PC-9 (cell line): ENCODE measurements at regions of chr17 and their contacts with region 1.

Region 1: DNA sequence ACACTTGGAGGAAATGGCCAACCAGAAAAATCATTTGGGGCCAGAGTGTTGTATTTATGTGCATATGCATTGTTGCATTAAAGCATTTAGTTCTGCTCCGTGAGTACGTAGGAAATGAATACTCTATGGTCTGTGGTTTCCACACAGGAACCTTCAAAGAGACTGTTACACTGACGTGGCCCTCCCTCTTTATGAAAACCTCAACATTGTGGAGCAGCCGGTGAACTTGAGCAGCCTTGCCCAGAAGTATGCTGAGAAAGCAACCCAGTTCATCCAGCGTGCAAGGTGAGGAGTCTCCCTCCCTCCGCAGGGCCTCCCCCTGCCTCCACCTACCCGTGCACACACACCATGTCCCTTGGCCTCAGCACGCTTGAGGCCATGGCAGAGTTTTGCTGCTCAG is 65.2 kb downstream of the ARSG start:
- DNase-seq: no peak
- H3K4me3 ChIP-seq: no peak overlapping the region
- H3K27ac ChIP-seq: no peak overlapping the region
- H3K4me1 ChIP-seq: peaks cover 41% of the 10 kb centered on the region
- H3K27me3 ChIP-seq: no peaks in the 10 kb centered on the region
- CTCF ChIP-seq: no peak

Region 2: DNA sequence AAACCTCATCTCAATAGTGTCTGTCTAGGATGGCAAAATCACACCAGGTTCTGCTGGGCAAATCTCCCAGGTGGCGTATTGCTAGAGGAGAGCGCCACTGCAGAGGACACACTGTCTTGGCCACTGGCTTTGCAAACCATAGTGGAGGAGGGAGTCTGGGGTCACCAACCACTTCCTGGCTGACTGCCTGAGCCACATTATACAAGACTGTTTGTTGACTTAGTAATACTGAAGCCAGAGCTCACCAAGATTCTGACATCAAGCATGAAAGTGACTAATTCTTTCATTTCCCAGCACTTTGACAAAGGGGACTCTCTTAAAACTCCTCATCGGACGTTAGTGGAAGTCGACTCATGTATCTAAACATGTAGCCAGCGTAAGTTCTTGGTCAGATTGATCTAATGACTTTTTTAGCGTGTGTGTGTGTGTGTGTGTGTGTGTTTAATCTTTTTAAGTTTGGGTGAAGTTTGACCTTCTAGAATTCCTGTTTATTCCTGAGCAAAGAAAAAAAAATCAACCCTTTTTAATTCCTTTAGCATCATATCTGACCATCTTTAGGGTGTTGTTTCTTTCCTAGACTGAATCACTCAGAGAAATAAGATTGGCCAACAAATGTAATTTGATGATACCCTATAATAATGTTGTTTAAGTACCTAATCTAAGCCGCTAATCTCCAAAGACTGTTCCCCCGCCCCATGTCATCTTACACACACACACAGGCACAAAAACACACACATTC is 965.7 kb before region 1 on chr17:
- CTCF ChIA-PET with region 1: interaction called, 11 read pairs
- POLR2A ChIA-PET with region 1: no interaction called
- intact Hi-C with region 1: no loop called
- DNase-seq: peak; percentile 61 to 95
- H3K4me3 ChIP-seq: peak overlapping the region; percentile 33; the same call in 1 of the 2 replicates
- H3K27ac ChIP-seq: peak overlapping the region; percentile 81
- H3K4me1 ChIP-seq: peaks cover 28% of the 10 kb centered on the region
- H3K27me3 ChIP-seq: no peaks in the 10 kb centered on the region
- CTCF ChIP-seq: no peak

Region 3: GRCh38 chr17:68260051-68260762 is 96.3 kb before region 1 on chr17:
- CTCF ChIA-PET with region 1: no interaction called
- POLR2A ChIA-PET with region 1: interaction called, 39 read pairs
- intact Hi-C with region 1: no loop called
- DNase-seq: no peak
- H3K4me3 ChIP-seq: no peak overlapping the region
- H3K27ac ChIP-seq: no peak overlapping the region
- H3K4me1 ChIP-seq: peaks cover 10% of the 10 kb centered on the region; the same call in 1 of the 2 replicates
- H3K27me3 ChIP-seq: no peaks in the 10 kb centered on the region
- CTCF ChIP-seq: no peak

Region 4: GRCh38 chr17:68318103-68318991 is 38.2 kb before region 1 on chr17:
- CTCF ChIA-PET with region 1: no interaction called
- POLR2A ChIA-PET with region 1: no interaction called
- intact Hi-C with region 1: loop called (anchors 1 kb)
- DNase-seq: peak; percentile 71 to 97
- H3K4me3 ChIP-seq: peak overlapping the region; percentile 25; the same call in 1 of the 2 replicates
- H3K27ac ChIP-seq: peak overlapping the region; percentile 82
- H3K4me1 ChIP-seq: peaks cover 45% of the 10 kb centered on the region
- H3K27me3 ChIP-seq: no peaks in the 10 kb centered on the region
- CTCF ChIP-seq: no peak

Region 5: GRCh38 chr17:68377862-68378770 is 21.6 kb after region 1 on chr17:
- CTCF ChIA-PET with region 1: no interaction called
- POLR2A ChIA-PET with region 1: no interaction called
- intact Hi-C with region 1: loop called (anchors 2 kb)
- DNase-seq: peak; percentile 49 to 75
- H3K4me3 ChIP-seq: peak overlapping the region; percentile 49
- H3K27ac ChIP-seq: peak overlapping the region; percentile 87
- H3K4me1 ChIP-seq: peaks cover 63% of the 10 kb centered on the region
- H3K27me3 ChIP-seq: no peaks in the 10 kb centered on the region
- CTCF ChIP-seq: no peak